SK-MEL-5 (cell line): ENCODE measurements at regions of chrX and their contacts with region 1.

Region 1: GRCh38 chrX:10189317-10190268 is 32.8 kb downstream of the CLCN4 start:
- DNase-seq: peak; percentile 72

Region 2: DNA sequence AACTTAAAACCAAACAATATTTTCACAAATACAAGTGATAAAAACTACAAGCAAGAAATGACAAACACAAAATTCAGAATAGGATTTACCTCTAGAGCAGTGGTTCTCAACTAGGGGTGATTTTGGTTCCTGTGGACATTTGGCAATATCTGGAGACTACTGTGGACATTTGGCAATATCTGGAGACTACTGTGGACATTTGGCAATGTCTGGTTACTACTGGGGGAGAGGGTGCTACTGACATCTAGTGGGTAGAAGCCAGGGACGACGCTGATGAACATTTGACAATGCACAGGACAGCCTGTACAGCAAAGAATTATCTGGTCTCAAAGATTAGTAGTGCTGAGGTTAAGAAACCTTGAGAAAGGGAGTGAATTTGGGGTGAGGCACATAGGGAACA is 137.0 kb after region 1 on chrX:
- in situ Hi-C with region 1: no loop called
- DNase-seq: peak; percentile 64

Region 3: GRCh38 chrX:10636337-10636736 is 446.7 kb after region 1 on chrX:
- in situ Hi-C with region 1: loop called (anchors 25 kb)
- DNase-seq: peak; percentile 85